T-cell (primary cell): ENCODE measurements at regions of chr12 and their contacts with region 1.

Region 1: GRCh38 chr12:110431957-110432587 is 18.1 kb downstream of the ARPC3 start:
- DNase-seq: no peak
- ATAC-seq: peak in 1 of 4 experiments; percentile 26
- H3K4me3 ChIP-seq: peak overlapping the region in 1 of 2 donors; percentile 55
- H3K4me3 Mint-ChIP-seq: peak overlapping the region in 1 of 3 donors; percentile 100
- H3K27ac ChIP-seq: no peak overlapping the region
- H3K27ac Mint-ChIP-seq: no peak overlapping the region
- H3K4me1 ChIP-seq: peaks cover 0 to 4% of the 10 kb centered on the region in 2 experiments
- H3K4me1 Mint-ChIP-seq: peaks cover 0 to 3% (median 0%) of the 10 kb centered on the region in 3 donors
- H3K27me3 ChIP-seq: peaks cover 0 to 7% of the 10 kb centered on the region in 2 experiments
- H3K27me3 Mint-ChIP-seq: no peaks in the 10 kb centered on the region

Region 2: GRCh38 chr12:110100315-110100970 is 331.6 kb before region 1 on chr12:
- CTCF ChIA-PET with region 1: interaction called, 8 to 38 read pairs
- POLR2A ChIA-PET with region 1: interaction called in 1 of 2 experiments, 4 read pairs
- DNase-seq: peak in 33 of 35 experiments; percentile 13 to 86 (median 41)
- ATAC-seq: peak; percentile 78 to 84 (median 80)
- H3K4me3 ChIP-seq: no peak overlapping the region
- H3K4me3 Mint-ChIP-seq: peak overlapping the region in 1 of 3 donors; percentile 13
- H3K27ac ChIP-seq: peak overlapping the region; percentile 34
- H3K27ac Mint-ChIP-seq: peak overlapping the region; percentile 53 to 67
- H3K4me1 ChIP-seq: no peaks in the 10 kb centered on the region
- H3K4me1 Mint-ChIP-seq: peaks cover 5 to 8% (median 8%) of the 10 kb centered on the region in 3 donors
- H3K27me3 ChIP-seq: peaks cover 0 to 5% of the 10 kb centered on the region in 2 experiments
- H3K27me3 Mint-ChIP-seq: peaks cover 0 to 2% of the 10 kb centered on the region in 2 donors

Region 3: DNA sequence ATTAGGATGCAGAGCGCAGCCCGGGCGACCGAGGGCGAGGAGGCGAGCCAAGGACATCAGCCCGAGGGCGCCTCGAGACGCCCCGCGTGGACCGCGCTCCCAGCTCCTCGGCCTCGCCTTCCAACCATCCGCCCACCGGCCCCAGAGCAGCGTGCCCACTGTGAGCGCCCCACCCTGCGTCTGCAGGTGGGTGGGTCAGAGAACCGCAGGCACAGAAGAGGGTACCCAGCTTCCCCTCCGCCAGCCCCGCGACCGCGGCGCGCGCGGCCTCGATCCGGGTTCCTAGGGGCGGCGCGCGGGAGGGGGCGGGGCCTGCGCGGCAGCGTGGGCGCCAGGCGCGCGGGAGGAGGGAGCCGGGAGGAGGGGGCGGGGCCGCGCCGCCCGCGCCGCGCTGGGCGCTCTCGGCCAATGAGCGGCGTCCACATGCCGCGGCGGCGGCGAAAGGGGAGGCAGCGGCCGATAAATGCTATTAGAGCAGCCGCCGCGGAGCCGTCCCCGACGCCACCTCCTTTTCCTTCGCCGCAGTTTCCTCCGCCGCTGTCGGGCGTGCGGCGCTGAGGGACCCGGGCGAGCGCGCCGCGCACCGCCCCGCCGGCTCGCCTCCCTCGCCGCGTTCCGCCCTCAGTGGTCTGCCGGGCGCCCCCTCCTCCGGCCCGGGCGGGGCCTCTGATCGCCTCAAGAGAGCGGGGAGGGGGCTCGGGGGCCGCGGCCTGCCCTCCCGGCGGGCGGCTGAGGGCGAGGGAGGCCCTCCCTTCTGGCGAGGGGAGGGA is 151.1 kb before region 1 on chr12 and contains the start of gene ATP2A2:
- CTCF ChIA-PET with region 1: interaction called in 1 of 2 experiments, 11 read pairs
- POLR2A ChIA-PET with region 1: no interaction called
- DNase-seq: peak; percentile 81 to 97 (median 89)
- ATAC-seq: peak; percentile 88 to 92 (median 88)
- H3K4me3 ChIP-seq: peak within 1 kb of the TSS; percentile 71 to 84
- H3K4me3 Mint-ChIP-seq: peak within 1 kb of the TSS; percentile 86 to 90 (median 89)
- H3K27ac ChIP-seq: peak within 1 kb of the TSS; percentile 64
- H3K27ac Mint-ChIP-seq: peak within 1 kb of the TSS; percentile 88 to 90
- H3K4me1 ChIP-seq: peaks cover 16 to 35% of the 10 kb centered on the region in 2 experiments
- H3K4me1 Mint-ChIP-seq: peaks cover 45 to 48% (median 46%) of the 10 kb centered on the region in 3 donors
- H3K27me3 ChIP-seq: no peaks in the 10 kb centered on the region
- H3K27me3 Mint-ChIP-seq: no peaks in the 10 kb centered on the region
- total RNA-seq, gene ATP2A2: 82.0 to 88.2 (median 82.8) TPM

Region 4: DNA sequence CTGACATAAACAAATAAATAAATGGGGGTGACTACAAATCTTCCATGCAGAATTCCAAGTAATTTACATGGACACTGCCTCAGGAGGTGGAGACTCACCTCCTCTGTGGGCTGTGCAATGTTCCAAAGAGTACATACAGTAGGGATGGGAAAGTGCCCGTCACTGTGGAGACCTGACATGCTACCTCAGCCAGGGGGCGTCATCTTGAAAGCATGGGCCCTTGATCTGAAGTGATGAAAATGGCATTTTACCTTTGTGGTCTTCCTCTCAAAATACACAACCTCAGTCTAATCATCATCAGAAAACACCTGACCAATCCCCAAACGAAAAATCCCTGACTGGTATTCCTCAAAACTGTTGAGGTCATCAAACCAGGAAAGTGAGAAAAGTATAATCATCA is 77.0 kb before region 1 on chr12:
- CTCF ChIA-PET with region 1: interaction called in 1 of 2 experiments, 13 read pairs
- POLR2A ChIA-PET with region 1: no interaction called
- DNase-seq: peak in 17 of 35 experiments; percentile 7 to 52 (median 17)
- ATAC-seq: peak in 2 of 4 experiments; percentile 35 to 63
- H3K4me3 ChIP-seq: no peak overlapping the region
- H3K4me3 Mint-ChIP-seq: no peak overlapping the region
- H3K27ac ChIP-seq: no peak overlapping the region
- H3K27ac Mint-ChIP-seq: no peak overlapping the region
- H3K4me1 ChIP-seq: peaks cover 0 to 5% of the 10 kb centered on the region in 2 experiments
- H3K4me1 Mint-ChIP-seq: peaks cover 23 to 27% (median 24%) of the 10 kb centered on the region in 3 donors
- H3K27me3 ChIP-seq: peaks cover 0 to 2% of the 10 kb centered on the region in 2 experiments
- H3K27me3 Mint-ChIP-seq: no peaks in the 10 kb centered on the region

Region 5: GRCh38 chr12:110449799-110450497 is 17.9 kb after region 1 on chr12 and contains the start of gene ARPC3:
- CTCF ChIA-PET with region 1: interaction called, 6 to 64 read pairs
- POLR2A ChIA-PET with region 1: interaction called, 5 to 7 read pairs
- DNase-seq: peak; percentile 89 to 97 (median 94)
- ATAC-seq: peak; percentile 93 to 99 (median 98)
- H3K4me3 ChIP-seq: peak within 1 kb of the TSS; percentile 95 to 99
- H3K4me3 Mint-ChIP-seq: peak within 1 kb of the TSS; percentile 100
- H3K27ac ChIP-seq: peak within 1 kb of the TSS; percentile 89
- H3K27ac Mint-ChIP-seq: peak within 1 kb of the TSS; percentile 100
- H3K4me1 ChIP-seq: peaks cover 10 to 39% of the 10 kb centered on the region in 2 experiments
- H3K4me1 Mint-ChIP-seq: peaks cover 39 to 44% (median 43%) of the 10 kb centered on the region in 3 donors
- H3K27me3 ChIP-seq: no peaks in the 10 kb centered on the region
- H3K27me3 Mint-ChIP-seq: no peaks in the 10 kb centered on the region
- total RNA-seq, gene ARPC3: 177 to 204 (median 191) TPM

Region 6: GRCh38 chr12:112153181-112153893 is 1721.3 kb after region 1 on chr12:
- CTCF ChIA-PET with region 1: no interaction called
- POLR2A ChIA-PET with region 1: interaction called in 1 of 2 experiments, 10 read pairs
- DNase-seq: peak in 1 of 35 experiments; percentile 5
- ATAC-seq: no peak
- H3K4me3 ChIP-seq: no peak overlapping the region
- H3K4me3 Mint-ChIP-seq: no peak overlapping the region
- H3K27ac ChIP-seq: no peak overlapping the region
- H3K27ac Mint-ChIP-seq: peak overlapping the region; percentile 23 to 46
- H3K4me1 ChIP-seq: peaks cover 0 to 3% of the 10 kb centered on the region in 2 experiments
- H3K4me1 Mint-ChIP-seq: peaks cover 17% of the 10 kb centered on the region in 3 donors
- H3K27me3 ChIP-seq: no peaks in the 10 kb centered on the region
- H3K27me3 Mint-ChIP-seq: no peaks in the 10 kb centered on the region